Left cardiac atrium (tissue), 4 donors: ENCODE measurements at regions of chr16 and their contacts with region 1.

Region 1: DNA sequence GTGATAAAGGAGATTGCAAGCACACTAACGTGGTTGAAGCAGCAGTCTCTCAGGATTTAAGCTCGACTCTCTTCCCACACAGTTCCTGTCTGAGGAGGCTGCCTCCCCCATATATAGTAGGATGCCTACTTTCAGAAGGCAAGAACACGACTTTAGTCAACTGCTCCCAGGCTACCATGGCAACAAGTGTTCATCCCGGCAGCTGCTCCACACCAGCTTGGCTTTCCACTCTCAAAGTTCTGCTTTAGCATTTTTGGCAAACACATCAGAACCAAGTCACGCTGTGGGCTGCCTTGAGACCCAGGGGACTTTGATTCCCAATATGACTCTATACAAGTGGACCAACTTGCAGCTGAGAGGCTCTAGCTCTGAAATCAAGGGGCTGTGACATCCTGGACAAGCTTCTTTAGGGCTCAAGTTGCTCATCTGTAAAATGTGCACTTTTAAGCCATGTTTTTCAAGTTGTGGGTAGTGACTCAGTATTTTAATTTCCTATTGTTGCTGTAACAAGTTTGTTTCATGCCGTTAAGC is 16.5 kb downstream of the ZP2 start:
- DNase-seq: no peak
- ATAC-seq: no peak

Region 2: DNA sequence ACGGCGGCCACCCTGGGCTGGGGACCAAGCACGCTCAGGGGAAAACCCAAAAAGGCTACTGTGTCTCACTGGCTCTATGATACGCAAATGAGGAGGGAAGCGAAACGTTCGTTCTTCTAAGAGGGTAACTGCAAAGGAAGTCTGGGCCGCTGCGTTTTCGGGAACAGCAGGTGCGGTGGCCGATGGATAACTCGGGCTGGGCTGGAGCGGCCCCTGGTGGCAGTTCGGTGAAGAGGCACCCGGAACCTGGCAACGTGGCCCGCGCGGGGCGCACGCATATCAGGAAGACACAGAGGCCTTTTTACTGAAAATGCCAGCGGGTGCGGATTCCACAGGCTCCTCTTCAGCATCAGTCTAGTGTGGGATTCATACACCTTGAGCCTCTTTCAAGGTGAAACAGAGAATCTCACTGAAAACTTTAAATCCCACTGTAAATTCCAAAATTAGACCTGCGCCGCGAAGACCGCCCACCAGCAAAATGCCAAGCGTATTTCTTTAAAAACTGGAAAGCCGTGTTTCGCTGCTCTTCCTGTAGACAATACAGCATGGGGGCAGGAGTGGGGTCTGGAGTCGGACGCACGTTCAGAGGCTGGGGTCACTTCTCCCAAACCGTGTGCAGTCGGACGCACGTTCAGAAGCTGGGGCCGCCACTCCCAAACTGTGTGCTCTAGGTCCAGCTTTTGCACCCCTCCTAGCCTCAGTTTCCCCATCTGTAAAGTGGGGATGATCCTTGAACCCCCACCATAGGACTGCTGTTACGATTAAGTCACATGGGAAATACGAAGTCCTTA is 360.2 kb after region 1 on chr16:
- intact Hi-C with region 1: loop called in 1 of 2 experiments (anchors 10 kb)
- DNase-seq: peak; percentile 92
- ATAC-seq: peak; percentile 86 to 87